ENCODE measurements at regions of chr2 and their contacts with region 1.

Region 1: GRCh38 chr2:144430722-144431391 is 89.1 kb downstream of the ZEB2 start:
- DNase-seq: peak in 1 of 10 donors; percentile 45
- H3K4me3 ChIP-seq: peak overlapping the region; percentile 7 to 64 (median 44)
- H3K27ac ChIP-seq: peak overlapping the region; percentile 82 to 99 (median 96)
- H3K27me3 ChIP-seq: no peaks in the 10 kb centered on the region
- CTCF ChIP-seq: no peak

Region 2: GRCh38 chr2:144510294-144510991 is 79.6 kb after region 1 on chr2:
- intact Hi-C with region 1: loop called (anchors 5 kb)
- DNase-seq: no peak
- H3K4me3 ChIP-seq: peak overlapping the region; percentile 15 to 100 (median 85)
- H3K27ac ChIP-seq: peak overlapping the region; percentile 95 to 100 (median 100)
- H3K27me3 ChIP-seq: no peaks in the 10 kb centered on the region
- CTCF ChIP-seq: peak in 2 of 56 donors; percentile 8 to 10